Natural killer cell (primary cell): ENCODE measurements at regions of chr4 and their contacts with region 1.

Region 1: GRCh38 chr4:107330915-107331314 is 294.8 kb upstream of the DKK2 start:
- DNase-seq: no peak
- ATAC-seq: no peak
- H3K4me3 ChIP-seq: no peak overlapping the region
- H3K4me3 Mint-ChIP-seq: no peak overlapping the region
- H3K27ac ChIP-seq: no peak overlapping the region
- H3K27ac Mint-ChIP-seq: no peak overlapping the region
- H3K4me1 ChIP-seq: no peaks in the 10 kb centered on the region
- H3K4me1 Mint-ChIP-seq: no peaks in the 10 kb centered on the region
- H3K27me3 ChIP-seq: no peaks in the 10 kb centered on the region
- H3K27me3 Mint-ChIP-seq: no peaks in the 10 kb centered on the region
- CTCF ChIP-seq: no peak

Region 2: DNA sequence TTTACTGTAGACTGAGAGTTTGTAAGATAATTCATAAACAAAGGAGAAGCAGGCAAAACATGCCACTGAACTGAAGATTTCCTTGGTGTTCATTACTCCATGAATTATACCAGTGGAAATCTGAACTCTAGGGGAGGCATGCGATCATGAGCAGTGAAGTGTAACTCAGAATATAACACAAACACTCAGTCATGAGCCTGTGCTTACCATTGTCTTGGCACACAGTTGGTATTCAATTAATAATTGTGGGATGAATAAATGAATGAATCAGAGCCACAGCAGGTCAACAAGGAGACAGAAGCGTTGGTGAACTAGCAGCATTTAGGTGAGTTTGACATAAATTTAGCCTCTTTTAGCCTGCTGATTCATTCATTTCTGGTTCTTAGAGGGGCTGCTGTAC is 31.3 kb before region 1 on chr4:
- intact Hi-C with region 1: loop called (anchors 1 kb)
- DNase-seq: no peak
- ATAC-seq: no peak
- H3K4me3 ChIP-seq: no peak overlapping the region
- H3K4me3 Mint-ChIP-seq: no peak overlapping the region
- H3K27ac ChIP-seq: no peak overlapping the region
- H3K27ac Mint-ChIP-seq: no peak overlapping the region
- H3K4me1 ChIP-seq: no peaks in the 10 kb centered on the region
- H3K4me1 Mint-ChIP-seq: no peaks in the 10 kb centered on the region
- H3K27me3 ChIP-seq: no peaks in the 10 kb centered on the region
- H3K27me3 Mint-ChIP-seq: no peaks in the 10 kb centered on the region
- CTCF ChIP-seq: no peak